ENCODE measurements at regions of chr3 and their contacts with region 1.

Region 1: DNA sequence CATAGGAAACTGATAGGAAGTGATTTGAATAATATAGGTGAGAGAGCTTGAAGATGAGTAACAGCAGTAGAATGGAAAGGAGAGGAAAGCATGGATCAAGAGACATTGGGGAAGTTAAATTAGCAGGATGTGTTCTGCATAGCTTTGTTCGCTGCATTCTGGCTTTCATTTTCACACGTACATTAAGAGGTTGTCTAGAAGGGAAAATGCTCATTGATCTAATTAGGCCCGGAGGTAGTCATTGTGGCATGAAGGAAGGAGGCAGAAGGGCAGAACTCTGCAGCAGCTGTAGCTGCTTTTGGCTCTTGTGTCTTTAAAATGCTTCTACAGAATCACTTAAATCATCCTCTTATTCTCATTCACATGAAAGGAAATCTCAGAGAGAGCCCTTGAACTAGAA is 40.3 kb downstream of the KCNAB1 start:
- ATAC-seq: peak in 2 of 8 experiments; percentile 20 to 21
- H3K4me3 ChIP-seq: no peak overlapping the region
- H3K27ac ChIP-seq: no peak overlapping the region
- H3K4me1 ChIP-seq: peaks cover 4 to 8% of the 10 kb centered on the region in 2 donors

Region 2: GRCh38 chr3:155418407-155418806 is 742.2 kb before region 1 on chr3:
- in situ Hi-C with region 1: no loop called
- ATAC-seq: peak in 5 of 8 experiments; percentile 78 to 94 (median 85)
- H3K4me3 ChIP-seq: no peak overlapping the region
- H3K27ac ChIP-seq: no peak overlapping the region
- H3K4me1 ChIP-seq: peaks cover 15 to 17% of the 10 kb centered on the region in 2 donors

Region 3: DNA sequence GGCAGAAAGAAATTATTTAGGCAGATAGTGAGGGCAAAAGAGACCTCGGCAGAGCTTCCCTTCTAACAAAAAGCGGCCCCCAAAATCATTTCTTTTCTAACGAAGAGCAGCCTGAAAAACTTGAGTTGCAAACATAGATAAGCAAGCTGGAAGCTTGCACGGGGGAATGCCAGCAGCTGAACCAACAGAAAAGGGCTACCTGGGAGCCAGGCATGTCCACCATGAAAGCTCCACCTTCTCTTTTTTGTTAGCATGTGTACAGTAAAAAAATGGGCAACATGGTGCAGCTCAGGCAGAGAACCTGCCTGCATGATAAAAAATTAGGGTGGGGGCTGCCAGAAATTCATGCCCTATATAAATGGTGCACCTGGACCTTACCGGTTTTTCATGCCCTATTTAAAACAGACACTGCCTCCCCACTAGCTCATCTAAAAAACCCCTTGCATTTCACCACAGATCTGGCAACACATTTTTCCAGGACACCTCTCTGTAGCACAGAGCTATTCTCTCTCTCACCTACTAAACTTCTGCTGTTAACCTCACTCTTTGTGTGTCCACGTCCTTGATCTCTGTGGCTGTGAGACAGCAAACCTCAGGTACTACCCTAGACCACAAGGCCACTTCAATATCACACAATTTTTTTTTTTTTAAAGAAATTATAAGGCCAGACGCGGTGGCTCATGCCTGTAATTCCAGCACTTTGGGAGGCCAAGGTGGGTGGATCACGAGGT is 325.1 kb before region 1 on chr3:
- in situ Hi-C with region 1: no loop called
- ATAC-seq: no peak
- H3K4me3 ChIP-seq: no peak overlapping the region
- H3K27ac ChIP-seq: no peak overlapping the region
- H3K4me1 ChIP-seq: no peaks in the 10 kb centered on the region

Region 4: GRCh38 chr3:156382458-156383346 is 222.1 kb after region 1 on chr3:
- in situ Hi-C with region 1: loop called in 1 of 9 experiments (anchors 10 kb)
- ATAC-seq: peak in 3 of 8 experiments; percentile 35 to 72 (median 39)
- H3K4me3 ChIP-seq: no peak overlapping the region
- H3K27ac ChIP-seq: no peak overlapping the region
- H3K4me1 ChIP-seq: no peaks in the 10 kb centered on the region